ENCODE measurements at regions of chr10 and their contacts with region 1.

Region 1: GRCh38 chr10:60099998-60100747 is 193.8 kb upstream of the CCDC6 start:
- DNase-seq: no peak
- H3K4me3 ChIP-seq: no peak overlapping the region
- H3K27ac ChIP-seq: no peak overlapping the region
- H3K4me1 ChIP-seq: no peaks in the 10 kb centered on the region
- H3K27me3 ChIP-seq: no peaks in the 10 kb centered on the region
- CTCF ChIP-seq: peak; percentile 42 to 62 (median 54)
- POLR2A ChIP-seq: no peak

Region 2: DNA sequence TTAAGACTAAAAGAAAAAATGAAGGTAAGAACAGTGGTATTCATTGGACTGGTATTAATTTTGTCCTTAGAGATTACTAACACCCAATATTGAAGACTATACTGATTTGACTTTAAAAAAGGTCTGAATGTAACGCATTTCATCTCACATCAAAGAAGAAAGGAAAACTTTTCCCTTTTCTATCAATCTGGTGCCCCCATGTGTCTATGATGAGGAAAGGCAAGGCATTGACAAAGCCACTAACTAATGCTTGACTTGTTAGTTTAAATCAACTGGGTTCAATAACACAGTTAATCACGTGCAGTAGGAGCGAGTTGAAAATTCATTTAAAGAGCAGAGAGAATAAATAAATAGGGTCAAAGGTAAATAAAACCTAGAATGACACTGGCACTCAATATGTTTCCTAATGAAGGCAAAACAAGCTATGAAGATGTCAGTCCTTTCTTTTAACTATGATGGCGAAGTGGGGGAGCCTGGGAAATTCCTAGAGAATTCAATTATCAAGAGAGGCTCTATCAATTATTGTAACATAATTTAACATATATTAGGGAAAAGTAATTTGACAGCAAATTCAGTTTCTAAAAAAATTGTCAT is 108.6 kb after region 1 on chr10:
- intact Hi-C with region 1: loop called (anchors 10 kb)
- DNase-seq: no peak
- H3K4me3 ChIP-seq: no peak overlapping the region
- H3K27ac ChIP-seq: no peak overlapping the region
- H3K4me1 ChIP-seq: no peaks in the 10 kb centered on the region
- H3K27me3 ChIP-seq: no peaks in the 10 kb centered on the region
- CTCF ChIP-seq: peak in 5 of 6 experiments; percentile 46 to 67 (median 51)
- POLR2A ChIP-seq: no peak

Region 3: GRCh38 chr10:60434418-60435046 is 334.4 kb after region 1 on chr10:
- intact Hi-C with region 1: loop called (anchors 10 kb)
- DNase-seq: no peak
- H3K4me3 ChIP-seq: no peak overlapping the region
- H3K27ac ChIP-seq: no peak overlapping the region
- H3K4me1 ChIP-seq: peaks cover 0 to 13% (median 0%) of the 10 kb centered on the region in 3 donors
- H3K27me3 ChIP-seq: no peaks in the 10 kb centered on the region
- CTCF ChIP-seq: peak; percentile 41 to 79 (median 64)
- POLR2A ChIP-seq: no peak

Region 4: GRCh38 chr10:60646966-60647796 is 547.0 kb after region 1 on chr10:
- intact Hi-C with region 1: loop called (anchors 10 kb)
- DNase-seq: no peak
- H3K4me3 ChIP-seq: no peak overlapping the region
- H3K27ac ChIP-seq: no peak overlapping the region
- H3K4me1 ChIP-seq: peaks cover 0 to 14% (median 0%) of the 10 kb centered on the region in 3 donors
- H3K27me3 ChIP-seq: no peaks in the 10 kb centered on the region
- CTCF ChIP-seq: peak; percentile 40 to 80 (median 74)
- POLR2A ChIP-seq: no peak